GM10248 (cell line): ENCODE measurements at regions of chr7 and their contacts with region 1.

Region 1: DNA sequence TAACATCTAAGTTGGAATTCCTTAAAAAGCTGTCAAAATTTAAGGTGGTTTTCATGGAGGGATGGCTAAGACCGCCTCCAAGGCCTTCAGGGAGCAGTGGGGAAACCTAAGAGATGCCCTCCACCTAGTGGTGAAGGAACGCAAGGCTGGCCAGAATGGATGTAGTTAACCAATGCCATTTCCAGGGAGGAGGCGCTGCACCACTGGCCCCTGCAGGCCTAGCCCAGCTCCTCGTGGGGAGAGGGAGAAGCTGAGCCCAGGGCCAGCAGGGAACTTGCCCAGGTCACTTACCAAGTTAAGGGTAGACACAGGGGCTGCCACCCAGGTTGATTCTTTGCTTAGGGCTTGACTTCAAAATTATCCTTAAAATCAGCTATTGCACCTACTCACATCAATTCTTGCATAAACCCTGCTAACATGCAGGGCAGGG is 32.0 kb downstream of the FIGNL1 start:
- DNase-seq: peak; percentile 75
- CTCF ChIP-seq: peak; percentile 97

Region 2: DNA sequence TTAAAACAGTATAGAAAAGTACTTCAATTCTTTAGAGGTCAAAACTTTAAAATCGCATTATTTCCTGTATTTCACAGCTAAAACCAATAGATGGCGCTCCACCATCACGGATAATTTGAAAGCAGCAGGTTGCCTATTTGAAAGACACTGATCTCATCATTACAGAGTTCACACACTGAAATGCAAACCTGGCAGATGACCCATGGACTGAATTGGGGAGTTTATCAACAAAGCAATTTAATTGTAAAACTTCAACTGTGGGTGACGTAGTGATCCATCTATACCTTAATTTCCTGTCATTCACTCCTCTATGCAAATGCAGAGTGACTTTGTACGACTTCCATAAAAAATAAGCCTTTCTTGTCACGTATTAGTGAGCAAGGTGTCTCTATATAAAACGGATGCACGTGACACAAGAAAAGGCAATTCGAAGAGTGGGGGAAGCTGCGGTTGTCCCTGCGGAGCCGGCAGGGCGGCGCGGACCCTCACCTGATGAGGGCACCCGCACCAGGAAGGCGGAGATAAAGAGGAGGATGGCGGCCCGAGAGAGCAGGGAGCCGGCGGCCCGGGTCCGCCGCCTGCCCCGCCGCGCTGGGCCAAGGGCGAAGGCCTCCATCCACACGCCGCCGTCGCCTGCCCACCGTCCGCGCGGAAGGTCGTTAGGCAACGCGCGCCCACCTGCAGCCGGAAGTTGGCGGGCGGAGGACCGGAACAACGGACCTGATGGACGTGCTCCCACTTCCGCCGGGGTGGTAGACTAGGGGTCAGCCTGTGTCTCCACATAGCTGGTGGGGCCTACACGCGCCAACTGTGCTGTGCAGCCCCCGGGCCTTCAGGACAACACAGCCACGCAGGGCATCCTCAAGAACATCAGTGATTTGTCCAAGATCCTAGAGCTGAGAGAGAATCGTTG is 325.3 kb before region 1 on chr7 and contains the start of gene ZPBP:
- CTCF ChIA-PET with region 1: interaction called, 14 read pairs
- POLR2A ChIA-PET with region 1: no interaction called
- DNase-seq: peak; percentile 54
- CTCF ChIP-seq: peak; percentile 74

Region 3: DNA sequence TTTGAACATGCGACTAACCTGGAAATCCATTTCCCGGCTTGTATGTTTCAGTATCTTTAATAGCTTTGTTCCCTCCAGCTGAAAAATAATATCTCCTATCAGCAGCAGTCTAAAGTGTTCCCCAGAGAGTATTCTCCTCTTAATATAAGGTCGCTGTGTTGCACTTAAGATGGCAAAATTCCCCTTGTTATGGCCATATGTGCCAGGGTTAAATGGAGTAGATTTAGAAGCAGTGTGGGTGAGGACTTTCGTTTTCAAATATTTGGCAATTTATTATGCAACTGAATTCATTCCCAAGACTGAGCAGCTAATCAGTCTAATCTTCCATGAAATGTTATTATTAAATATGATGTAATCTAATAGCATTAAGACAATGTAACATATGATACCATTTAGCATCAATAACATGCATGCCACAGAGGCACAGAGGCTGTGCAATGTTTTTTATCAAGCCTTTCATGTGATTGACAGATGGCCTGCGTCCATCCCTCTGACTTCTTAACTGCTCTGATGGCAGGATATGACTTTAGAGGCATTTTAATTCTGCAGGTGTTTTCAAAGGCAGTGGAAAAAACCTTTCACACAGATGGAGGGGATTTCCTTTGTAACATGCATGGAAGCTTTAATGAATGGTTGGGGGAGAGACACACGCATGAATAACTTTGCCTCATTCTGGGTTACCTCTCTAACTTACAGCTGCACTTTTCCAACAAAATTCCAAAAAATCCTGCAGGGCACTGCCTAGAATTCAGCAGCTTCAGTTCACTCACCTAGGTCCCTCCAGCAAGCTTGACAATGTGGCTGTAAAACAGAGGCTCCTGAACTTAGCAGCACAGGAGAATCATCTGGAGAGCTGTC is 269.9 kb before region 1 on chr7:
- CTCF ChIA-PET with region 1: interaction called, 34 read pairs
- POLR2A ChIA-PET with region 1: no interaction called
- DNase-seq: peak; percentile 43
- CTCF ChIP-seq: no peak

Region 4: DNA sequence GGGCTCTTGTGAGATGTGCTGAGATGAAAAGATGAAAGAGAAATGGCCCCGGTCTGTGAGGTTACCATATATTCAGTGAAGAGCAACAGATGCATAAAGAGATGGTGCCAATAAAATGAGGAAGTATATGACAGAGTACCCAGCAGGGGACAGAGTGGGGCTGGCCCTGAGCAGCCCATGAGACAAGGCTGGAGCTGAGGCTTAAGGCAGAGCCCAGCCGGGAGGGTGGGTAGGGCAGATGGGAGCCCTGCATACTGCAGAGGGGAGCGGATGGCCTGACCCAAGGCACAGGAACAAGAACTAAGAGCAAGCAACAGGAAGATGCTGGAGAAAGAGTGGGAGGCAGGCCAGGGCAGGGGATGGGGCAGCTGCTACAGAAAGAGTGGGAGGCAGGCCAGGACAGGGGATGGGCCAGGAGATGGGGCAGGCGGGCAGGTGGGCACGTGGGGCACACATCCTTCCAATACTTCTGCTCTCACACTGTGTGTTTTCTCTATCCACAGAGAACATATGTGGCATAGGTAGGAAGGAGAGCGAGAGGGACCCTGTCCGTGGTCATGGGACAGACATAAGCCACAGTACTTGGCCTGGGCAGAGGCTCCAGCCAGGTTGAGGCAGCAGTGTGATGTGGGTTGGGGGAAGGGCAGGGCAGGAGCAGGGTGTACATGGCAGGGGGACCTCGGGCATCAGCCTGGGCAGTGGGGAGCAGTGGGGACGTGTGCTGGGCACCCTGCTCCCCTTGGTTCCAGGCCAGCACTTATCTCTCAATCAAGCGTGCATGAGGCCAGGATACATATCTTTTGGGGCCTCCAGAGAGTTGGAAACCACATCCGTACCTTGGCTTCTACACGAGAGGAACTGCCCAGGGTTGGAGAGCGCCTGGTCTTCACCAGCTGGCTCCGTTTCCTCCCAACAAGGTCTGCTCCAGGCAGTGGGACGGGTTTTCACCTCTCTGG is 205.2 kb before region 1 on chr7:
- CTCF ChIA-PET with region 1: interaction called, 99 read pairs
- POLR2A ChIA-PET with region 1: no interaction called
- DNase-seq: no peak
- CTCF ChIP-seq: peak; percentile 32

Region 5: DNA sequence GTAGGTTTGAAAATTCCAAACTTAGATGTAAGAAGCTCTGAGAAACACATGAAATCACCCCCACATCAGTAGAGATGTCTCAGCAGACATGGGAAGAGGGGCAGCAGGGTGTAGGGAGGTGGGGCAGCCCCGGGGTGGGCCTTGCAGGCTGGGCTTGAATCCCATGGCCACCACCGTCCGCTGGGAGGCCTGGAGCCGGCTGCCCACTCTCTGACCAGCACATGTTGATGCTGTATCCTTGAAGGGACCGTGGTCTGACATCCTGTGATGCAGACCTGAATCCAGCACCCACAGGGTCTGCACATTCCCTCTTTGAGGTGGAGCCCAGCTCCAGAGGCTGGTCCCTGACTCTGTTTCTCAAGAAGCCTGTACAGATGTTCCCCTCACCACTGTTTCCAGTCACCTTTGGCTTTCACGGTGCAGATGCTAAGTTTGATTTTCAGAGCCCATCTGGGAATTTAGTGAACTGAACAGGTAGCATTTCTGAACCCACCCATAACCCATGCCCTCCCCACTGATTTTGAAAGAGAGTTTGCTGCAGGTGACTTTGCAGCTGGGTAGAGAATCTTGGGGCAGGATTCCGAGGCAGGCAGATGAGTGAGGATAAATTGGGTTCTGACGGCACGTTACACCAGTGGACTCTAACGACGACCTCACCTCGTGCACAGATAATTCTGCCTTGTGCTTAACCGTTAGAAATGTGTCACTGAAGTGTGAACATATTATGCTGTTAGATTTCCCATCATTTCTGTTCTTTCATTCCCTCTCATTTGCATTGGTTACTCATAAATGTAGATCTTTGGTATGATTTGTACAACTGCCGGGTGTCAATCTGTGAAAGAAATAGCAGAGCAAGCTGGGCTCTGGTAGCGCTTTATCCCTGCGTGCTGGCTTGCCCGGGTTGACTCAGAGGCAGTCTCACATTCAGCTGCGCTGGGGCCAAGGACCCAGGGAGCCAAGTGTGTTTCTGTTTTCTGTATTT is 67.8 kb before region 1 on chr7:
- CTCF ChIA-PET with region 1: interaction called, 12 read pairs
- POLR2A ChIA-PET with region 1: no interaction called
- DNase-seq: peak; percentile 57
- CTCF ChIP-seq: no peak

Region 6: GRCh38 chr7:50397320-50397970 is 20.7 kb before region 1 on chr7:
- CTCF ChIA-PET with region 1: interaction called, 16 read pairs
- POLR2A ChIA-PET with region 1: no interaction called
- DNase-seq: peak; percentile 47
- CTCF ChIP-seq: no peak

Region 7: DNA sequence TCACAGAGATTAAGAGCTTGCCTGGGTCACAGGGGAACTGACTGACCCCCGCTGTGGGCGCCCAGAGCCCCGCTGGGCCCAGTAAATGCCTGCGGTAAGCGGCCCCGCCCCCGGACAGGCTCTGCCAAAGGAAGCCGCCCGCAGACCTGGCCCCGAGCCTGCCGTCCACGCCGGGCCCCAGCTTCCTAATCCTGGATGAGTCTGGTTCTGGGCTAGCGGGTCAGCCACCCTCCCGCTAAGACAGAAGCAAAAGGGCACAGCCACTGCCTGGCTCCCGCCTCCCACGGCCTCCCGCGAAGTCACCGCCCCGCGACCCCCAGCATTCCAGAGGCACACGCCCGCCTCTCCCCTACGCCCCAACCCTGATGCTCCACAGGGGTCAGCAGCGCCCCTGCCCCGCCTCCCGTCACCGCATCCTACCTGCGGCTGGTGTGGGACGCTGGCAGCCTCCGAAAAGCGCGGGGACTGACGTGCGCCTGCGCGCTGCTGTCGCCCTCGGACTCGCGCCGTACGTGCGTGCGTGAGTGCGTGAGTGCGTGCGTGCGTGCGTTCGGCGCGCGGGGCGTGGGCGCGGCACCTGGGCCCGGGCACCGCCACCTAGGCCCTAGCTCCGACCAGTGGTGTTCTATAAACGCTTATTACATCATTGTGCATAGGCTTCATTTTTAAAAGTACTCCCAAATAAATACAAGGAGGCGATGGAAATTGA is 31.9 kb after region 1 on chr7 and contains the start of gene FIGNL1:
- CTCF ChIA-PET with region 1: interaction called, 12 read pairs
- POLR2A ChIA-PET with region 1: no interaction called
- DNase-seq: peak; percentile 89
- CTCF ChIP-seq: no peak